Gastrocnemius medialis (tissue), 4 donors: ENCODE measurements at regions of chr7 and their contacts with region 1.

Region 1: DNA sequence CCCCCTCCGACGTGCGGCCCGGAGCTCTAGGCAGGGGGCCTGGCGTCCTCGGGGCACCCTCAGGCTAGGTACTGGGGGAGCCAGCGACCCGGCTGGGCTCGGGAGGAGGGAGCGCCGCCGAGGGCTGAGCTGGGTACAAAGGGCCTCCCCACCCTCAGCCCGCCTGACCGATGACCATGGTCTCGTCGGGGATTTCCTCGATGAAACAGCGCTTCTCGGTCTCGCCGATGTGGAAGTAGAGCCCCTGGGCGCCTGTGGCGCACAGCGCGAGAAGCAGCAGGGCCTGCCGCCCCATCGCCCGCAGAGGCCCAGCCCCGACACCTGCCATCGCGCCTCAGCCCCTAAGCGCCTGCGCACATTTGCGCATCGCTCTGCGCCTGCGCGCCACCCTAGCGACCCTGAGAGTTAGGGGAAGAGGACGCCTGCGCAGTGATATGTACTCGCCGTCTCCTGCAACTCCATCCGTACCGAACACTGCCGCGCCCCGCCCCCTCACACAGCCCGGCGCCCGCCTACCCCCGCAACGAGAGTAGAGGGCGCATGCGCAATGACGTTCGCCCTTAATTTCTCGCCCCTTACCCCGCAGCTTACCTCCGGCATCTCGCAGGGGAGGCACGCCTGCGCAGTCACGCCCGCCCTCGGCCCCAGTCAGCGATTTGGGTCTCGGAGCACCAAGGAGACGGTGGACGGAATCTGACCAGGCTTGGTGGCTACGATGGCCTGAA is at the start of gene TMED4:
- DNase-seq: peak; percentile 100
- ATAC-seq: peak; percentile 92 to 96
- H3K4me3 ChIP-seq: peak within 1 kb of the TSS; percentile 67 to 98 (median 81)
- H3K27ac ChIP-seq: peak within 1 kb of the TSS; percentile 95 to 98 (median 97)
- H3K4me1 ChIP-seq: peaks cover 14 to 28% of the 10 kb centered on the region in 2 donors
- H3K27me3 ChIP-seq: no peaks in the 10 kb centered on the region
- CTCF ChIP-seq: no peak
- POLR2A ChIP-seq: peak; percentile 86 to 93
- total RNA-seq, gene TMED4: 85.8 to 162 (median 101) TPM

Region 2: DNA sequence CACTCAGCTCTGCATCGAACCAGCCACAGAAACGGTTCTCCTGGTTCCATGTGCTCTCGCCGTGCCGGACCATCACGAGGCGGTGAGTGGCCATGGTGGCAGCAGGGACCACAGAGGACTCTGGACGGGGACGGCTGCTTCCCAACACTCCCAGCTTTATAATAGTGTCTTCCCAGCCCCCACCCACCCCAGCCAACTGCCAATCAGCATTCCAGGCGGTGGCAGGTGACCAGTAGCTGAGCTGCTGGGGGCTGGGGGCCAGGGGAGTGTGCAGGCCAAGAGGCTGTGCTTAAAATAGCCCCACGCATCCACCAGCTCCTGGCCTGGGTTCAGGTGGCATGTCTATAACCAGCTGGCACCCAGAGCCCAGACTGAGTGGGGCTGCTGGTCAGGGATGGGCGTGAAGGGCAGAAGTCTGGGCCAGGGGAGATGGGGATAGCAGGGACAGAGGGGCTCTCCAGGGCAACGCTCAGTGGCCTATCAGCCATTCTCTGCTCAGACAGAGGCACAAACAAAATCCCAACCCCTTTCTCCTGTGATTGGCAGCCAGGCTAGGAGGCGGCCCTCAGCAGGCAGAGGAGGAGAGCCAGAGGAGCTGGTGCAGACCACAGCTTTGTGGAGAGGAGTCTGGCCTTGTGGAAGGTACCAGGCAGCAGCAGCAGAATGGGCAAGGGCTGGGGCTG is 516.5 kb before region 1 on chr7 and contains the start of gene PGAM2:
- in situ Hi-C with region 1: no loop called
- intact Hi-C with region 1: loop called (anchors 5 kb)
- DNase-seq: peak; percentile 89 to 96
- ATAC-seq: peak; percentile 65 to 73
- H3K4me3 ChIP-seq: peak within 1 kb of the TSS; percentile 27 to 53 (median 46)
- H3K27ac ChIP-seq: peak within 1 kb of the TSS; percentile 85 to 95 (median 90)
- H3K4me1 ChIP-seq: peaks cover 56 to 70% of the 10 kb centered on the region in 2 donors
- H3K27me3 ChIP-seq: no peaks in the 10 kb centered on the region
- CTCF ChIP-seq: no peak
- POLR2A ChIP-seq: peak; percentile 73 to 75
- total RNA-seq, gene PGAM2: 129 to 355 (median 306) TPM

Region 3: GRCh38 chr7:44157131-44158051 is 424.6 kb before region 1 on chr7:
- in situ Hi-C with region 1: no loop called
- intact Hi-C with region 1: no loop called
- DNase-seq: no peak
- ATAC-seq: no peak
- H3K4me3 ChIP-seq: no peak overlapping the region
- H3K27ac ChIP-seq: no peak overlapping the region
- H3K4me1 ChIP-seq: peaks cover 10 to 11% of the 10 kb centered on the region in 2 donors
- H3K27me3 ChIP-seq: no peaks in the 10 kb centered on the region
- CTCF ChIP-seq: no peak
- POLR2A ChIP-seq: no peak

Region 4: GRCh38 chr7:44606450-44607254 is 24.6 kb after region 1 on chr7 and contains the start of gene OGDH:
- in situ Hi-C with region 1: no loop called
- intact Hi-C with region 1: loop called (anchors 1 kb)
- DNase-seq: peak; percentile 98
- ATAC-seq: peak; percentile 88 to 92
- H3K4me3 ChIP-seq: peak within 1 kb of the TSS; percentile 72 to 88 (median 82)
- H3K27ac ChIP-seq: peak within 1 kb of the TSS; percentile 91 to 99 (median 96)
- H3K4me1 ChIP-seq: peaks cover 13 to 14% of the 10 kb centered on the region in 2 donors
- H3K27me3 ChIP-seq: no peaks in the 10 kb centered on the region
- CTCF ChIP-seq: peak in 1 of 5 experiments; percentile 23
- POLR2A ChIP-seq: peak; percentile 98
- total RNA-seq, gene OGDH: 224 to 462 (median 396) TPM

Region 5: DNA sequence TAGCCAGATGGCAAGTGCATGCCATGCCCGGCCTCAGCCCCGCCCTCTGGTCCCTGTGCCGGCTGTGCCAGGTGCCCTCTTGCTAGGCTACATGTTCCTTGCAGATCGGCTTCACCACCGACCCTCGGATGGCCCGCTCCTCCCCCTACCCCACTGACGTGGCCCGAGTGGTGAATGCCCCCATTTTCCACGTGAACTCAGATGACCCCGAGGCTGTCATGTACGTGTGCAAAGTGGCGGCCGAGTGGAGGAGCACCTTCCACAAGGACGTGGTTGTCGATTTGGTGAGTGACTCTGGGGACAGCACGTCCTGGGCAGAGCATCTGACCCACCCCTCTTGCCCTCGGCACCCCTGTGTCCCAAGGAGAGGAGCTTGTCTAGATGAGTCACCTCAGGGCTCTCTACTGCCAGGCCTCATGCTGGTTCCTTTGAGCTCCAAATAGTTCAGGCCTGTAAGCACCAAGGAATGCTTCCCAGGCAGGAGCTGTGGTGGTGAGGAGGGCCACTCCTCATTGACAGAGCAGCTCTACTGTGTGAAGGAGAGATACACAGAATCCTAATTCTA is 111.8 kb after region 1 on chr7:
- in situ Hi-C with region 1: no loop called
- intact Hi-C with region 1: no loop called
- DNase-seq: peak; percentile 91 to 97
- ATAC-seq: peak; percentile 90 to 96
- H3K4me3 ChIP-seq: peak overlapping the region in 1 of 4 donors; percentile 27
- H3K27ac ChIP-seq: peak overlapping the region; percentile 87 to 93 (median 90)
- H3K4me1 ChIP-seq: peaks cover 0 to 10% of the 10 kb centered on the region in 2 donors
- H3K27me3 ChIP-seq: no peaks in the 10 kb centered on the region
- CTCF ChIP-seq: no peak
- POLR2A ChIP-seq: peak; percentile 57 to 75

Region 6: GRCh38 chr7:44748045-44748947 is 166.3 kb after region 1 on chr7 and contains the start of gene ZMIZ2:
- in situ Hi-C with region 1: loop called in 1 of 4 experiments (anchors 25 kb)
- intact Hi-C with region 1: loop called (anchors 5 kb)
- DNase-seq: peak; percentile 90 to 91
- ATAC-seq: peak; percentile 86 to 88
- H3K4me3 ChIP-seq: peak within 1 kb of the TSS; percentile 72 to 84 (median 78)
- H3K27ac ChIP-seq: peak within 1 kb of the TSS; percentile 89 to 97 (median 94)
- H3K4me1 ChIP-seq: peaks cover 21 to 28% of the 10 kb centered on the region in 2 donors
- H3K27me3 ChIP-seq: no peaks in the 10 kb centered on the region
- CTCF ChIP-seq: no peak
- POLR2A ChIP-seq: peak; percentile 83 to 84
- total RNA-seq, gene ZMIZ2: 10.7 to 19.8 (median 14.0) TPM

Region 7: DNA sequence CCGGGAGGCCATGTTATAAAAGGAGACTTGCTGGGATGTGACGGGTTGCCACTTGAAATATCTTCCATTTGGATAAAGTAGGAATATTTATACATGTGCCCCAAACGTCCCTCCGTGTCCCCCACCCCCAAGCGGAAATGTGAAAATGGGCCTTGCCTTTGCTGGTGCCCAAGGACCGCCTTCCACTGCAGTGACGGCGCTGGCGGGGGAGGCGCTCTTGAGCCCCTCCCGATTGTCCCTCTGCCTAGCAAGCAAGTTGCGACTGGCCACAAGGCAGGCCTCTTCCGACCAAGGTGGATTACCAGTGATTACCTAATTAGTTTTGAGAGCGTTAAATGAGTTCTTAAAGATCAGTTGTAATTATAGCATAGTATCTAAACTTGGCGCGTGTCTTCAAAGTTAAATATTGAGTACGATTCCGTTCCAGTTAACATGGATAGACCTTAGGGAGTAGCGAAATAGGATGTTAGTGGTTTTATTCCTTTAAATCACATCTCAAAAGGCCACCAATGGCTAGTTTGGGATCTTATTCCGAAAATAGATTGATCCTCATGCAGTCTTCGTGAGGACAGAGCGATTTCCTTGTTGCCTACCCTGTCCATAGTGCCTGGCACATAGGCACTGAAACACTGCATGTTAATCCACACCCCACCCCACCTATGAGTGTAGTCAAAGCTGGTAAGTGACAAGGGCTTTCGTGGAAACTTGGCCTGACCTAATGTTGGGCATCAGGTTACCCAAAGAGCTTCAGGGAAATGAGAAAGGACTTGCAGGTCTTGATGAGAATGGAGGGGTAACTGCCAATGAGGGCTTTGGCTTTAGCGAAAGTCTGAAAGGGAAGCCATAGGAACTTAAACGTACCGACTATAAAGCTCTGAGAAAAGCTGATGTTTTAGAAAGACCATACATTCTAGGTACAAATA is 215.5 kb after region 1 on chr7:
- in situ Hi-C with region 1: no loop called
- intact Hi-C with region 1: loop called (anchors 2 kb)
- DNase-seq: peak; percentile 81 to 86
- ATAC-seq: peak; percentile 75 to 76
- H3K4me3 ChIP-seq: peak overlapping the region; percentile 72 to 79 (median 75)
- H3K27ac ChIP-seq: peak overlapping the region; percentile 89 to 97 (median 96)
- H3K4me1 ChIP-seq: peaks cover 16 to 23% of the 10 kb centered on the region in 2 donors
- H3K27me3 ChIP-seq: no peaks in the 10 kb centered on the region
- CTCF ChIP-seq: peak in 2 of 5 experiments; percentile 29 to 52
- POLR2A ChIP-seq: peak in 1 of 2 donors; percentile 27

Region 8: DNA sequence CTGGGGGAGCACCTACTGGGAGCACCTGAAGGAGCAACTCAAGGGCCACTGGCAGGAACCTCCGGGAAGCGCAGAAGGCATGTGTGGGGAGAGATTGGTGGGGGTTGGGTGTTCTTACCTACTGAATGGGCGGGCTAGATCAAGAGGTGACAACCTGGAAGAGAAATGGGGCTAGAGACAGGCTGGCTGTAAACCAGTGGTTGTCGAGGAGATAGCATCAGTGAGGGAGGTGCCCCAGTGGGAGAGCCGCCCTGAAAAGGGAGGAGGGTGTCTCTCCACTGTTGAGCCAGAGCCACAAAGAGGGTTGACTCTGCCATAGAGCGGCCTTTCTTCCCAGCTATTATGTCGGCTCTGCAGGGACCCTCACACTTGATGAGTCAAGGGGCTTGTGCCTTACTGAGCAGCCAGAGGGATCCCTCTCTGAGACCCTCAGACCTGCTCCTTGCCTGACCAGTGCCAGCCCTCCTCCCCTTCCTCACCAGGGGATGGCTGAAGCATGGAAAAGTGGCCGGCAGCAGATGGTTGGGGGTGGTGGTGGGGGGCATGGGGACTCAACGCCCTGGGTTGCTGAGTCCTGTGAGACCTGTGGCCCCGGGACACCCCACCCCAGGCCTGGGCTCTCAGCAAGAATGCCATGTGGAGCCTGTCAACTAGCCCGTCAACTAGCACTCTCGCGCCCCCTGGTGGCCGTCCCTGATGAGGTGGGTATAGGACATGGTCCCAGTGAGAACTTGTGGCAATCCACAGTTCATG is 339.7 kb after region 1 on chr7:
- in situ Hi-C with region 1: loop called in 2 of 4 experiments (anchors 10 kb)
- intact Hi-C with region 1: loop called (anchors 5 kb)
- DNase-seq: peak; percentile 71 to 83
- ATAC-seq: peak; percentile 95 to 99
- H3K4me3 ChIP-seq: no peak overlapping the region
- H3K27ac ChIP-seq: no peak overlapping the region
- H3K4me1 ChIP-seq: no peaks in the 10 kb centered on the region
- H3K27me3 ChIP-seq: no peaks in the 10 kb centered on the region
- CTCF ChIP-seq: peak; percentile 81 to 93 (median 88)
- POLR2A ChIP-seq: no peak

Region 9: GRCh38 chr7:45111298-45112223 is 529.5 kb after region 1 on chr7 and contains the start of gene TBRG4:
- in situ Hi-C with region 1: loop called (anchors 25 kb)
- intact Hi-C with region 1: loop called (anchors 10 kb)
- DNase-seq: peak; percentile 90 to 91
- ATAC-seq: peak; percentile 96 to 97
- H3K4me3 ChIP-seq: peak within 1 kb of the TSS; percentile 87 to 95 (median 91)
- H3K27ac ChIP-seq: peak within 1 kb of the TSS; percentile 93 to 99 (median 95)
- H3K4me1 ChIP-seq: peaks cover 33 to 47% of the 10 kb centered on the region in 2 donors
- H3K27me3 ChIP-seq: no peaks in the 10 kb centered on the region
- CTCF ChIP-seq: peak in 2 of 5 experiments; percentile 22 to 28
- POLR2A ChIP-seq: peak; percentile 86 to 92
- total RNA-seq, gene TBRG4: 74.3 to 105 (median 92.7) TPM